ENCODE measurements at regions of chr11 and their contacts with region 1.

Region 1: GRCh38 chr11:12963792-12964536 is 45.2 kb upstream of the RASSF10 start:
- DNase-seq: peak; percentile 68
- ATAC-seq: peak; percentile 92 to 93

Region 2: DNA sequence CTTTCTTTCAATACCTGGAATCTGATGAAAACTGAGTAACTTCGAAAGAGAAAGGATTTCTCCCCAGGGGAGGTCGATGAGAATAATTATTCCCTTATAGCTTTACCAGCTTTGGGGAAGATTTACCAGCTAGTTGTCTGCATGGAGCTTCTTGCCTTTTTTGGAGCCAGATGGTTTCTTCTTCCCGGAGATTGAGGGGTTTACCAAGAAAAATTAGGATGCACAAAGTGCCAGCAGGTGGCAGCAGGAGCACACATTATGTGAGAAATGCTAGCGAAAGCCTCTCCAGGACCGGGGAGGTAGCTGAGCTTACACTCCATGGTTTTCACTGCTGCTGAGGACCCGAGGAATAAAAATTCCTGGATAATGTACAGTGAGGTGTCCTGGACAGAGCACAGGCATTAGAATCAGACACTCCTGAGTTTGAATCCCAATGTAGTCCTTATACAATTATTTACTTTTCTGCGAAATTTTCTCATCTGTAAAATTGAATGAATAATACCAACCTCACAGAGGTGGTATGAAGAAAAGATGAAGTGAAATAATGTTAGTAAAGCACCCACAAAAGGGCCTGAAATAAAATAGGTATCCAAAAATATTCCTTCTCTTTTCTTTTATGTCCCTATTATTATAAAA is 632.6 kb before region 1 on chr11:
- intact Hi-C with region 1: loop called in 1 of 2 experiments (anchors 5 kb)
- DNase-seq: peak; percentile 88
- ATAC-seq: peak; percentile 82 to 86

Region 3: DNA sequence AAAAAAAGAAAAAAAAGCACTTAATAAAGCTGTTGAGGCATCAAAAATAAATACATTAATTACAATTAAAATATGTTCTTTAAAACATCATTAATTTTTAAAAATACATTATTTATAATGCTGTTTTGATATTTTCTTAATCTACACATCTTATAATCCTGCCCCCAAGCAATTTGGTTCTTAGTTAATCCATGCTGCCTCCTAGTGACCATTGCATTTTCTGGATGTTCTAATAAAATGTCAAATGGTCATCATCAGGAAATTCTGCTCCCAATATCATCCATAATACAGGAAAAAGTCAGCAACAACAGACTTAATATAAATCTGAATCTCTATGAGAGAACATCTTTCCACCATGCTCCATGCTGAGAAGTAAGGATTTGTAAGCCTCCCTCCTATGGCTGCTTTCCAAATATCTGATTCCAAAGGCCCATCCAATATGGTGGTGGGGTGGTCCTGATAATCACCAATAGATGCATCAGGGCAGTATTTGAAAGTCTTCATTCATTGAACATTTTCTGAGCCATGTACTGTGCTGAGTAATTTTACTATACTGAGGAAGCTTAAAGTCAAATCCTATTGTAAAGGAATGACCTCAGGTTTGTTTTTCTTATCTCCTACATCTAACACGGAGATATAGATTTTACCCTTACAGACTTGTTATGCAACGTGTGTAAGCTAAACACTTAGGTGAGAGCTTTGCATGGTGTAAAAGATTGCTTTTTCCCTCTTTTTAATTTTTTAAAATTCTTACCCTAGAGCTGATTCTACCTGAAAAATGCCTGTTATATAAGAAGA is 189.0 kb after region 1 on chr11:
- intact Hi-C with region 1: loop called (anchors 5 to 10 kb)
- DNase-seq: no peak
- ATAC-seq: no peak

Region 4: DNA sequence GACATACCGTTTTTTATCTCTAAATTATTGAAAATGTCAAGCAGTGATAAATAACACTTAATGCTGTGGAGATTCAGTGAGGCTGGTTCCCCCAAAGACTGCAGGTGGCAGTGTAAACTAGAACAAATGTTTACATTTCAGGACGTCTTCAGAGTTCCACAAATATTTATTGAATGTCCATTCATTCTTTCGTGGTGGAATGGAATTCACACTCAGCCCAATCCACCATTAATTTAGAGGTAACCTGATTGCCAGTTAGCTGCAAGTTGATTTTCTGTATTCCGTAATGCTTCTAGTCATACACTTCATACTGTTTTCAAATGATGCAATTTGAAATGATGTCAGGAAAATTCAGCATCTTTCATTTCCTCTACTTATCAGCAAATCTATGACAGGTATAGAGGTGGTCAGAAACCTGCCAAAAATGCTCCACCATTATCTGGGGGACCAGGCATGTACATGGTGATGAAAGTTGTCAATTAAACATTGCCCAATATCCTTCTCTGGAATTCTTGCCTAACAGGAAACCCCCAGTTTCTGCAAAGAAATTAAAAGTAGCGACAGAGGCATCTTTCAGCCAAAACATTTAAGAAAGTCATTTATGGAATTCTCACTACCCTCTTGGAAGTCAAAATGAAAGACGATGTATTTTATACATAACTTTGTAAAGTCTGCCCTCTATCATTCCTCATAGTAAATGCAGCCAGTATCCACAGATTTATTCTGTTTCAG is 219.3 kb after region 1 on chr11:
- intact Hi-C with region 1: loop called in 1 of 2 experiments (anchors 5 kb)
- DNase-seq: no peak
- ATAC-seq: peak; percentile 27 to 74

Region 5: GRCh38 chr11:13343931-13344717 is 380.2 kb after region 1 on chr11:
- intact Hi-C with region 1: loop called in 1 of 2 experiments (anchors 10 kb)
- DNase-seq: peak; percentile 70
- ATAC-seq: peak in 1 of 2 donors; percentile 42